ENCODE measurements at regions of chr5 and their contacts with region 1.

Region 1: DNA sequence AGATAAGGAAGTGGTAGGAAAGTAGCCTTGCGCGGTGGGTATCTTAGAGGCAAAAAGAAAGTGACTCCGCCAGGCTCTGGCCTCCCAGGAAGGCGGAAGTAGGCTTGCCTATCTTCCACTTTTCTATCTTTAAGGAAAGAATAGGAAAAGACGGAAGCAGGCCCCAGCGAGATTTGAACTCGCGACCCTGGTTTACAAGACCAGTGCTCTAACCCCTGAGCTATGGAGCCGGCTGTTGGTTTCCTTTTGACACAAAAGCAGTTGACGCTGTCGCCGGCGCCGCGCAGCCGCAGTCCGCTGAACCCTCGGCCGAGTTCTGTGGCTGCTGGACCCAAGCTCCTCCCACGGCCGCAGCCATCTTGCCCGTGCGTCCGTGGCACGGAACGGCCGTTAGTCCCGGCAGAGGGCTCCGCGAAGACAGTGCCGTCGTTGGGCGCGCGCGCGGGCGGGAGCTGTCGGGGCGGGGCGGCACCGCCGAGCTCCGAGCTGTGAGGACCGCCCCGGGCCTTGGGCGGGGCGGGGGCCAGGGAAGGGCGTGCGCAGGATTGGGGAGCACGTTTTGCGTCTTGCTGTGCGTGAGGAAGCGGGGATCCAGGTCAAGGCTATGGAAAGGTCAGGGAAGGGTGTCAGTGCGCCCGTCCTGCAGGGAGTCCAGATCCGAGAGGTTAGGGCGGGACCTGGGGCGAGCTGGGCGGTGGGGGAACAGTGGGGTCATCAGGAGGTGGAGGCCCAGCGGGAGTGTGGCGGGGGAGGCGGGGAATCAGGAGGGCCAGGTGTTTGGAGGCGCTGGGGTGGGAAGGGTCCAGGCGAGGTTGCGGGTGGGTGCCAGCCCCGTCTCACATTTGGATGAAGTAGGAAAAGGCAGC is 13.2 kb downstream of the TRIM7 start:
- DNase-seq: peak; percentile 96
- H3K4me3 ChIP-seq: peak overlapping the region; percentile 69
- H3K27ac ChIP-seq: peak overlapping the region; percentile 82
- H3K4me1 ChIP-seq: peaks cover 24% of the 10 kb centered on the region
- CTCF ChIP-seq: no peak

Region 2: GRCh38 chr5:181138258-181138657 is 53.5 kb before region 1 on chr5:
- CTCF ChIA-PET with region 1: no interaction called
- POLR2A ChIA-PET with region 1: no interaction called
- intact Hi-C with region 1: no loop called
- DNase-seq: no peak
- H3K4me3 ChIP-seq: no peak overlapping the region
- H3K27ac ChIP-seq: no peak overlapping the region
- H3K4me1 ChIP-seq: no peaks in the 10 kb centered on the region
- CTCF ChIP-seq: no peak

Region 3: GRCh38 chr5:181151146-181151545 is 40.6 kb before region 1 on chr5:
- CTCF ChIA-PET with region 1: no interaction called
- POLR2A ChIA-PET with region 1: no interaction called
- intact Hi-C with region 1: no loop called
- DNase-seq: peak; percentile 48
- H3K4me3 ChIP-seq: no peak overlapping the region
- H3K27ac ChIP-seq: no peak overlapping the region
- H3K4me1 ChIP-seq: peaks cover 25% of the 10 kb centered on the region
- CTCF ChIP-seq: 0 out of 2 replicates have a peak, but pooled peaks have one; percentile 49

Region 4: GRCh38 chr5:181167814-181168488 is 23.8 kb before region 1 on chr5:
- CTCF ChIA-PET with region 1: interaction called, 3 read pairs
- POLR2A ChIA-PET with region 1: interaction called, 19 read pairs
- intact Hi-C with region 1: loop called (anchors 1 kb)
- DNase-seq: peak; percentile 63
- H3K4me3 ChIP-seq: peak overlapping the region; percentile 56
- H3K27ac ChIP-seq: peak overlapping the region; percentile 41
- H3K4me1 ChIP-seq: peaks cover 79% of the 10 kb centered on the region
- CTCF ChIP-seq: peak; percentile 96

Region 5: DNA sequence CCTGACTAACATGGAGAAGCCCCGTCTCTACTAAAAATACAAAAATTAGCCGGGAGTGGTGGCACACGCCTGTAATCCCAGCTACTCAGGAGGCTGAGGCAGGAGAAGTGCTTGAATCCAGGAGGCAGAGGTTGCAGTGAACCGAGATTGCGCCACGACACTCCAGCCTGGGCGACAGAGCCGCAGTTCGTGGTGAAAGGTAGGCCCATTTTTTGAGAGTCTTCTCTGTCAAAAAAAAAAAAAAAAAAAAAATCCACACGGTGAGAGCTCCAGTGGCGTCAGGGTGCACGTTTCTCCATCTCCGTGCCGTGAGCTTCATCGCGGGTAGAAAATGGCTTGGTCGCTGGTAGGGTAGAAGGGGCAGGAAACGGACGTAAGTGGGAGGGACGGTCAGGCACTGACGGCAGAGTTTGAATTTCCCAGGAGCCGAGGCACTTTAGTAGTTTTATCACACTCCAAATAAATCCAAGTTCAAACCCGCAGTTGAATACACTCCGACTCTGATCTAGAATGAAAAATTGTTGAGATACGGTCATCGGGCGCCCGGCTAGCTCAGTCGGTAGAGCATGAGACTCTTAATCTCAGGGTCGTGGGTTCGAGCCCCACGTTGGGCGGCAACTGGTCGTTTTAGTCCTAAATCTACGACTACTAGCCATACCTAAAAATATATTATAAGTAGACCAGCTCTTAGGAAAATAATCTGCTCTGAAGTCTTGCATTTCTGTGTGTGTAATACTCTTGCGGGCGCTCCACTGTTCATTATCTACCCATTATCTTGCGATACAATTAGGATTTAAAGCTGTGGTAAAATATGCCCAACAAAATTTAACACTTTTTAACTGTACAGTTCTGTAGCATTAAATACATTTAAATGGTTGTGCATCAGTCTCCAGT is 15.7 kb after region 1 on chr5:
- CTCF ChIA-PET with region 1: interaction called, 5 read pairs
- POLR2A ChIA-PET with region 1: interaction called, 25 read pairs
- intact Hi-C with region 1: loop called (anchors 1 kb)
- DNase-seq: peak; percentile 87
- H3K4me3 ChIP-seq: peak overlapping the region; percentile 79
- H3K27ac ChIP-seq: peak overlapping the region; percentile 59
- H3K4me1 ChIP-seq: peaks cover 29% of the 10 kb centered on the region
- CTCF ChIP-seq: no peak

Region 6: DNA sequence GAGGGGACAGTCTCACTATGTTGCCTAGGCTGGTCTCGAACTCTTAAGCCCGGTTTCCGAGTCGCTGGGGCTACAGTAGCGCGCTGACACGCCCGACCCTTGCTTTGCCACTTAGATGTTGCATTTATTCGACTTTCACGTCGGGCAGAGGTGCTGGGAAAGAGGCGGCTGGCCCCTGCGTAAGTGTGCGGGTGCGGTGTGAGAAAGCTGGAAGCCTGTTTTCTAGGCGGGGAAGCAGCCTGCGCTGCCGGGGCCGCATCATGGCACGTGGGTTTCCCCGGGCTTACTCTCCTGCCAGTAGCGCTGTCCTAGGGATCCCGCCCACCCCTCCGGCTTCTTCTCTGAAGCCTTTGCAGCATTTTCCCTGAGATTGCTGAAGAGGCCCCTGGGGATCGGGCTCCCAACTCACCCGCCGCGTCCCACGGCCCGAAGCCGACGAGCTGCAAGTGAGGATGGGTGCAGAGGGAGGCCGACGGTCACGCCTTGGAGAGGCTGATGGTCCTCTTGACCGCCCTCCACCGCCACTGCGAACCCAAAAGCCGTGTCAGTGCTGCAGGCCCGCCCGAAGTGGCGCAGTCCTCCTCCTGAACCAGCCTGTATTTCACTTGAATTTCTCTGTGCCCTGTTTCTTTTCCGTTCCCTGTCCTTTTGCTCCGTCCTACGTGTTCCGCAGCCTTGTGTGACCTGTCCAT is 25.5 kb after region 1 on chr5:
- CTCF ChIA-PET with region 1: no interaction called
- POLR2A ChIA-PET with region 1: interaction called, 16 read pairs
- intact Hi-C with region 1: loop called (anchors 1 kb)
- DNase-seq: peak; percentile 82
- H3K4me3 ChIP-seq: peak overlapping the region; percentile 75
- H3K27ac ChIP-seq: peak overlapping the region; percentile 70
- H3K4me1 ChIP-seq: peaks cover 29% of the 10 kb centered on the region
- CTCF ChIP-seq: peak; percentile 67

Region 7: DNA sequence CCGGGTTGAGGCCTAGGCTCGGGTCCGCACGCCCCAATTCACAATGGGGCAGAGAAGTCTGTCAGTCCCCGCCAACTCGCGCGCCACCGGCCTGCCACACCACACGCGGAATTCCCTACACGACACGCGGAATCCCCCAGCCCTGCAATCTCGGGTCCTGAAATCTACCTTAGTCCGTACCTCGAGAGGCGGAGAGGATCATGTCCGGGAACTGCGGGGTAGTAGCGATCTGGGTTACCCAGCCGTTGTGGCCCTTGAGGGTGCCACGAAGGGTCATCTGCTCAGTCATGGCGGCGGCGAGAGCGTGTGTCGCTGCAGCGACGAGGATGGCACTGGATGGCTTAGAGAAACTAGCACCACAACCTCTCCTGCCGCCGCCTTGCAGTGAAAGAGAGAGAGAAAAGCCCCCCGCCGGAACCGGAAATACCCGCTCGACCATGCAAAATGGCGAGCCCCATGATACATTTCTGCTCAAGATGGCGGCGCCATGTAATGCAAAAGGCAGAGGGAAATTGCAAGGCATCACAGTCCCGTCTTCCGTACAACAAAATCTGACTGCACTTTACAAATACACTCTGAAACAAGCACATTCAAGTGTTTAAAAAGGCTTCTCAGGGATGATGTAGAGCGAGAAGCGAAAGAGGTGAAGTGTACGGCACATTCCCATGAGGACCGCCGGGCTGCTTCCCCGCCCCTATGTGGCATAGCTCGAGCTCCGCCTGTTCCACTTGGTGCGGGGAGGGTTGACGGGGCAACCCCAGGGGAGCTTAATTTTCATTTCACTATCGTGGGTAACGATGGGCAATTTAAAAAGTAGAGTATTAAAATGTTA is 52.0 kb after region 1 on chr5 and contains the start of gene RACK1:
- CTCF ChIA-PET with region 1: no interaction called
- POLR2A ChIA-PET with region 1: interaction called, 7 read pairs
- intact Hi-C with region 1: loop called (anchors 1 kb)
- DNase-seq: peak; percentile 94
- H3K4me3 ChIP-seq: peak within 1 kb of the TSS; percentile 89
- H3K27ac ChIP-seq: peak within 1 kb of the TSS; percentile 89
- H3K4me1 ChIP-seq: peaks cover 53% of the 10 kb centered on the region
- CTCF ChIP-seq: no peak
- total RNA-seq, gene RACK1: 4,583 and 5,614 TPM in 2 replicates

Region 8: GRCh38 chr5:181260387-181261319 is 68.9 kb after region 1 on chr5 and contains the start of gene TRIM52:
- CTCF ChIA-PET with region 1: no interaction called
- POLR2A ChIA-PET with region 1: interaction called, 5 read pairs
- intact Hi-C with region 1: loop called (anchors 1 kb)
- DNase-seq: peak; percentile 97
- H3K4me3 ChIP-seq: peak within 1 kb of the TSS; percentile 81
- H3K27ac ChIP-seq: peak within 1 kb of the TSS; percentile 77
- H3K4me1 ChIP-seq: peaks cover 28% of the 10 kb centered on the region
- CTCF ChIP-seq: no peak
- total RNA-seq, gene TRIM52: 16.1 and 25.1 TPM in 2 replicates

Measured in OCI-LY7 (cell line).